OCI-LY7 (cell line): ENCODE measurements at regions of chr15 and their contacts with region 1.

Region 1: DNA sequence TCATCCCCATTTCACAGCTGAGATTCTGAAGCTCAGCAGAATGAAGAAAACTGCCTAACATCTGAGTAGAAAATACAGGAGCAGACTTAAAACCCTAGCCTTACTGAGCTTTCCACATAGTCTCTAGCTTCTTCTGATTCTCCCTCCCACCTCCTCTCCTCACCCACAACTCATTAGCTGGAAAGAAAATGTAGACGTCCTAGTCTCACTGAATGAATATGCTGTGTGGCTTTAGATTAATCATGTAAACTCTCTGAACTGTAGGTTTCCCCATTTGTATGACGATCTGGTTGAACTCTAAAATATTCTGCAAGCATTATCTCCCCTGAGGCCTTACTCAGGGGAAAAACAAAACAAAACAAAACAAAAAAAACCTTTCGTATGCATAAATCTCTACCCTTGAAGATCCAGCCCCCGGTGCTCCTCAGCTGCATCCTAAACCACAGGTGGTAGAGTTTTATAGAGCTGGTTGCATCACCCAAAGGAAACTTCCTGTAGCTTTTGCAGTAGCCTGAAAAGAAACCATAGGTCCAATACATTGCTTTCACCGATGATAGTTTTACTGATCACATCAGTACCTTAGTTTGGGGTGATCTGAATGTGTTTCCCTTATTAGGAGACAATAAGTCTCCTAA is 40.6 kb downstream of the FOXB1 start:
- DNase-seq: peak; percentile 11
- H3K4me3 ChIP-seq: no peak overlapping the region
- H3K27ac ChIP-seq: no peak overlapping the region
- H3K4me1 ChIP-seq: no peaks in the 10 kb centered on the region
- CTCF ChIP-seq: no peak

Region 2: GRCh38 chr15:60101416-60101941 is 56.7 kb after region 1 on chr15:
- CTCF ChIA-PET with region 1: no interaction called
- POLR2A ChIA-PET with region 1: no interaction called
- intact Hi-C with region 1: loop called (anchors 10 kb)
- DNase-seq: no peak
- H3K4me3 ChIP-seq: no peak overlapping the region
- H3K27ac ChIP-seq: no peak overlapping the region
- H3K4me1 ChIP-seq: no peaks in the 10 kb centered on the region
- CTCF ChIP-seq: no peak